Naive thymus-derived CD4-positive, alpha-beta T cell (primary cell): ENCODE measurements at regions of chrX and their contacts with region 1.

Region 1: DNA sequence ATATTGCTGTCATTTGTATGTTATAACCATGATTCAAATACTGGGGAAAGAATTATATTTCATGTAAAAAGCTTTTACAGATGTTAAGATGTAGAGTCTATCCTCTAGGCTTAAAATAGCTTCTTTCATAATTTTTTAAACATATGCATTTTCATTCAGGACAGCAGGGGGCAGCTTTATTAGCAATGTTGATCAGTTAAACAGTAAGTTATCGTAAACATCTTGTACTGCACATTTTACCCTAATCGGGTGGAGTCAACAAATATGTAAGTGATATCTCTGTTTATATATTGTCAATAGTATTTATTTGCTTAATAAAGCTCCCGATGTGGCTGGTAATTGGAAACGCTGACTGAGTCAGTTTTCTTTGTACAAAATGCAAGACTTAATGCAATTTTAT is 142.5 kb upstream of the MED14 start:
- DNase-seq: peak in 6 of 9 donors; percentile 11 to 46 (median 33)
- ATAC-seq: no peak
- H3K4me3 ChIP-seq: no peak overlapping the region
- H3K4me3 Mint-ChIP-seq: peak overlapping the region in 1 of 10 donors; percentile 9
- H3K27ac ChIP-seq: no peak overlapping the region
- H3K27ac Mint-ChIP-seq: no peak overlapping the region
- H3K4me1 ChIP-seq: no peaks in the 10 kb centered on the region
- H3K4me1 Mint-ChIP-seq: no peaks in the 10 kb centered on the region
- H3K27me3 ChIP-seq: no peaks in the 10 kb centered on the region
- H3K27me3 Mint-ChIP-seq: peaks cover 0 to 4% (median 0%) of the 10 kb centered on the region in 5 donors

Region 2: GRCh38 chrX:40816906-40817305 is 61.0 kb before region 1 on chrX:
- CTCF ChIA-PET with region 1: no interaction called
- POLR2A ChIA-PET with region 1: no interaction called
- intact Hi-C with region 1: no loop called
- DNase-seq: no peak
- ATAC-seq: no peak
- H3K4me3 ChIP-seq: no peak overlapping the region
- H3K4me3 Mint-ChIP-seq: no peak overlapping the region
- H3K27ac ChIP-seq: no peak overlapping the region
- H3K27ac Mint-ChIP-seq: no peak overlapping the region
- H3K4me1 ChIP-seq: no peaks in the 10 kb centered on the region
- H3K4me1 Mint-ChIP-seq: no peaks in the 10 kb centered on the region
- H3K27me3 ChIP-seq: no peaks in the 10 kb centered on the region
- H3K27me3 Mint-ChIP-seq: no peaks in the 10 kb centered on the region

Region 3: GRCh38 chrX:41110801-41111625 is 233.1 kb after region 1 on chrX:
- CTCF ChIA-PET with region 1: interaction called, 49 read pairs
- POLR2A ChIA-PET with region 1: interaction called, 4 read pairs
- intact Hi-C with region 1: loop called (anchors 1 kb)
- DNase-seq: no peak
- ATAC-seq: peak; percentile 20
- H3K4me3 ChIP-seq: no peak overlapping the region
- H3K4me3 Mint-ChIP-seq: peak overlapping the region in 7 of 10 donors; percentile 14 to 66 (median 49)
- H3K27ac ChIP-seq: peak overlapping the region; percentile 3
- H3K27ac Mint-ChIP-seq: peak overlapping the region; percentile 7 to 87 (median 69)
- H3K4me1 ChIP-seq: peaks cover 20 to 50% of the 10 kb centered on the region in 2 donors
- H3K4me1 Mint-ChIP-seq: peaks cover 34 to 85% (median 72%) of the 10 kb centered on the region in 7 donors
- H3K27me3 ChIP-seq: no peaks in the 10 kb centered on the region
- H3K27me3 Mint-ChIP-seq: no peaks in the 10 kb centered on the region

Region 4: GRCh38 chrX:41250867-41251266 is 373.0 kb after region 1 on chrX:
- CTCF ChIA-PET with region 1: no interaction called
- POLR2A ChIA-PET with region 1: no interaction called
- intact Hi-C with region 1: loop called (anchors 2 to 5 kb)
- DNase-seq: no peak
- ATAC-seq: no peak
- H3K4me3 ChIP-seq: no peak overlapping the region
- H3K4me3 Mint-ChIP-seq: no peak overlapping the region
- H3K27ac ChIP-seq: no peak overlapping the region
- H3K27ac Mint-ChIP-seq: no peak overlapping the region
- H3K4me1 ChIP-seq: no peaks in the 10 kb centered on the region
- H3K4me1 Mint-ChIP-seq: peaks cover 0 to 8% (median 5%) of the 10 kb centered on the region in 7 donors
- H3K27me3 ChIP-seq: no peaks in the 10 kb centered on the region
- H3K27me3 Mint-ChIP-seq: peaks cover 0 to 4% (median 0%) of the 10 kb centered on the region in 5 donors

Region 5: DNA sequence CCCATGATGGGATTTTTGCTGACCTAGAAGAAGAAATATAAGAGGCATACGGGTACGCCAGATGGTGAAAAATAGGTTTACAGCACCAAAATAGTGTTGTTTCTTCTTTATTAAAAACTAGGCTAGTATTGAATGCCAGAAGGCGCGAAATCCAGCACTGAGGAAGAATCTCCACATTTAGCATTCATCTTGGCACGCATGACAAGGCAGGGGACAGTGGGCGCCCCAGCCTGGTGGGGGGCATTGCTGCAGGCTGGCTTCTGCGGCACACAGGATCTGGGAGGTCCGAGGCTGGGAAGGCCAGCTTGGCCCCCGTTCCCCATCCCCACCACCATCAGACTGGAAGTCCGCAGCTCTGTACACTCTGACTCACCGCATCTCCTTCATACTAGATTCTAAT is 380.3 kb after region 1 on chrX:
- CTCF ChIA-PET with region 1: no interaction called
- POLR2A ChIA-PET with region 1: no interaction called
- intact Hi-C with region 1: loop called (anchors 2 to 5 kb)
- DNase-seq: no peak
- ATAC-seq: no peak
- H3K4me3 ChIP-seq: no peak overlapping the region
- H3K4me3 Mint-ChIP-seq: no peak overlapping the region
- H3K27ac ChIP-seq: no peak overlapping the region
- H3K27ac Mint-ChIP-seq: no peak overlapping the region
- H3K4me1 ChIP-seq: no peaks in the 10 kb centered on the region
- H3K4me1 Mint-ChIP-seq: peaks cover 0 to 6% (median 3%) of the 10 kb centered on the region in 7 donors
- H3K27me3 ChIP-seq: no peaks in the 10 kb centered on the region
- H3K27me3 Mint-ChIP-seq: no peaks in the 10 kb centered on the region

Region 6: GRCh38 chrX:41406211-41406610 is 528.3 kb after region 1 on chrX:
- CTCF ChIA-PET with region 1: no interaction called
- POLR2A ChIA-PET with region 1: no interaction called
- intact Hi-C with region 1: no loop called
- DNase-seq: no peak
- ATAC-seq: no peak
- H3K4me3 ChIP-seq: no peak overlapping the region
- H3K4me3 Mint-ChIP-seq: no peak overlapping the region
- H3K27ac ChIP-seq: no peak overlapping the region
- H3K27ac Mint-ChIP-seq: no peak overlapping the region
- H3K4me1 ChIP-seq: no peaks in the 10 kb centered on the region
- H3K4me1 Mint-ChIP-seq: no peaks in the 10 kb centered on the region
- H3K27me3 ChIP-seq: no peaks in the 10 kb centered on the region
- H3K27me3 Mint-ChIP-seq: no peaks in the 10 kb centered on the region